Panc1 (cell line): ENCODE measurements at regions of chr7 and their contacts with region 1.

Region 1: GRCh38 chr7:130242198-130243014 is 24.3 kb upstream of the CPA2 start:
- DNase-seq: peak; percentile 24
- ATAC-seq: peak; percentile 96
- H3K4me3 ChIP-seq: no peak overlapping the region
- H3K27ac ChIP-seq: no peak overlapping the region
- H3K4me1 ChIP-seq: no peaks in the 10 kb centered on the region
- H3K27me3 ChIP-seq: no peaks in the 10 kb centered on the region
- CTCF ChIP-seq: peak; percentile 93

Region 2: GRCh38 chr7:130486114-130486958 is 243.9 kb after region 1 on chr7:
- CTCF ChIA-PET with region 1: no interaction called
- POLR2A ChIA-PET with region 1: no interaction called
- in situ Hi-C with region 1: no loop called
- intact Hi-C with region 1: loop called (anchors 5 kb)
- DNase-seq: peak; percentile 70
- ATAC-seq: peak; percentile 87
- H3K4me3 ChIP-seq: peak overlapping the region; percentile 62 to 82
- H3K27ac ChIP-seq: peak overlapping the region; percentile 76
- H3K4me1 ChIP-seq: peaks cover 25% of the 10 kb centered on the region
- H3K27me3 ChIP-seq: no peaks in the 10 kb centered on the region
- CTCF ChIP-seq: peak; percentile 95

Region 3: GRCh38 chr7:130831817-130832481 is 589.5 kb after region 1 on chr7:
- CTCF ChIA-PET with region 1: no interaction called
- POLR2A ChIA-PET with region 1: no interaction called
- in situ Hi-C with region 1: no loop called
- intact Hi-C with region 1: loop called (anchors 10 kb)
- DNase-seq: no peak
- ATAC-seq: no peak
- H3K4me3 ChIP-seq: no peak overlapping the region
- H3K27ac ChIP-seq: no peak overlapping the region
- H3K4me1 ChIP-seq: no peaks in the 10 kb centered on the region
- H3K27me3 ChIP-seq: no peaks in the 10 kb centered on the region
- CTCF ChIP-seq: peak; percentile 79; the same call in 1 of the 2 replicates